CD8-positive, alpha-beta T cell (primary cell): ENCODE measurements at regions of chr3 and their contacts with region 1.

Region 1: DNA sequence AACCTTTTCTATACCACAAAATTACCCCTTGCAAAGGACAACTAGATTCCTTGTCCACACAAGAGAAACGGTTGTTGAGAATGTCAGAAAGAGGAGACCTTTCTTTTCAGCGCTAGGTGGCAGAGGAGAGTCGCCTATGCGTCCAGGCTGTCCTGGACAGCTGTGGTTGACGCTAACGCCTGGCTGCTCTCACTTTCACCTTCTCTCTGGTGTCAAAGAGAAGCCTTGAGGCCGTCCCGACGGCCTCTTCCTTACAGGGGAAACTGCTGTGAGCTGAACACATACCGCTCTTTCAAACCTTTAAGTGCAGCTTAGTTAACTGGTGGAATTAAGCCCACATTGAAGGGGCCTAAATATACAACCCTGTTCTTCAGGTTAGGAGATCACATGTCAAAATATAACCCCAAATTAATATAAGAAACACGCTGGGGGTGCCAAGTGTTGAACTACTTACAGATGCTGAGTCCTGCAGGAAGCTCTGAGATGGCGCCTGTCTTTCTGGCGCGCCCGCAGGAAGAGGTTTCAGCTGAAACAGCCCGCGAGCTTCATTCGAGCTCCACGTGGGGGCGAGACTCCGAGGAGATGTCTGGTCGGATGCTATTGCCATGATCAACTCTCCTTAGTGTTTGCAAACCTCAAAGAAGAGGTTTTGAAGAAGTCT is 26.1 kb upstream of the KBTBD8 start:
- DNase-seq: peak; percentile 16 to 77 (median 55)
- ATAC-seq: peak; percentile 89
- H3K4me3 ChIP-seq: peak overlapping the region; percentile 46 to 70
- H3K4me3 Mint-ChIP-seq: peak overlapping the region; percentile 87
- H3K27ac ChIP-seq: peak overlapping the region in 1 of 2 experiments; percentile 33
- H3K27ac Mint-ChIP-seq: peak overlapping the region; percentile 77
- H3K4me1 ChIP-seq: peaks cover 8% of the 10 kb centered on the region
- H3K4me1 Mint-ChIP-seq: peaks cover 8% of the 10 kb centered on the region
- H3K27me3 ChIP-seq: no peaks in the 10 kb centered on the region
- H3K27me3 Mint-ChIP-seq: peaks cover 4% of the 10 kb centered on the region
- CTCF ChIP-seq: peak; percentile 89

Region 2: GRCh38 chr3:65170390-65171042 is 1801.5 kb before region 1 on chr3:
- CTCF ChIA-PET with region 1: no interaction called
- POLR2A ChIA-PET with region 1: no interaction called
- intact Hi-C with region 1: no loop called
- DNase-seq: no peak
- ATAC-seq: no peak
- H3K4me3 ChIP-seq: no peak overlapping the region
- H3K4me3 Mint-ChIP-seq: no peak overlapping the region
- H3K27ac ChIP-seq: no peak overlapping the region
- H3K27ac Mint-ChIP-seq: no peak overlapping the region
- H3K4me1 ChIP-seq: no peaks in the 10 kb centered on the region
- H3K4me1 Mint-ChIP-seq: no peaks in the 10 kb centered on the region
- H3K27me3 ChIP-seq: no peaks in the 10 kb centered on the region
- H3K27me3 Mint-ChIP-seq: no peaks in the 10 kb centered on the region
- CTCF ChIP-seq: no peak

Region 3: DNA sequence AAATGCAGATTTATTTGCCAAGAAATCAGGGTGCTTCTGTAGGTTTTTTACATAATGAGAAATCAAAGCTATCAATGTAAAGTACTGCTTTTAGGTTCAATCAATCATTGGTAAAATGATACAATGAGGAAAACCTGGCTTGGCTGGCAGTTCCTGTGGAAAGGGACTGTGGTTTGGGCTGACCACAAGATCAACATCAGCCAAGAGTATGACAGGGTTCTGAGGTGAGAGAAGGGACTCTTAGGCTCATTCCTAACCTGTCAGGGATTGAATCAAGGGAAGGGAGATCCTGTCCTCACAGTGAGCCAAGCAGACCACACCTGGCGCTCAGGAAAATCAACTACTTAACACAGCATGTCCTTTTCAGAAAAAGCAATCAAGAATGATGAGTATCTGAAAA is 1044.5 kb before region 1 on chr3:
- CTCF ChIA-PET with region 1: no interaction called
- POLR2A ChIA-PET with region 1: no interaction called
- intact Hi-C with region 1: no loop called
- DNase-seq: no peak
- ATAC-seq: no peak
- H3K4me3 ChIP-seq: no peak overlapping the region
- H3K4me3 Mint-ChIP-seq: no peak overlapping the region
- H3K27ac ChIP-seq: no peak overlapping the region
- H3K27ac Mint-ChIP-seq: no peak overlapping the region
- H3K4me1 ChIP-seq: no peaks in the 10 kb centered on the region
- H3K4me1 Mint-ChIP-seq: no peaks in the 10 kb centered on the region
- H3K27me3 ChIP-seq: peaks cover 0 to 2% of the 10 kb centered on the region in 2 experiments
- H3K27me3 Mint-ChIP-seq: peaks cover 5% of the 10 kb centered on the region
- CTCF ChIP-seq: no peak

Region 4: DNA sequence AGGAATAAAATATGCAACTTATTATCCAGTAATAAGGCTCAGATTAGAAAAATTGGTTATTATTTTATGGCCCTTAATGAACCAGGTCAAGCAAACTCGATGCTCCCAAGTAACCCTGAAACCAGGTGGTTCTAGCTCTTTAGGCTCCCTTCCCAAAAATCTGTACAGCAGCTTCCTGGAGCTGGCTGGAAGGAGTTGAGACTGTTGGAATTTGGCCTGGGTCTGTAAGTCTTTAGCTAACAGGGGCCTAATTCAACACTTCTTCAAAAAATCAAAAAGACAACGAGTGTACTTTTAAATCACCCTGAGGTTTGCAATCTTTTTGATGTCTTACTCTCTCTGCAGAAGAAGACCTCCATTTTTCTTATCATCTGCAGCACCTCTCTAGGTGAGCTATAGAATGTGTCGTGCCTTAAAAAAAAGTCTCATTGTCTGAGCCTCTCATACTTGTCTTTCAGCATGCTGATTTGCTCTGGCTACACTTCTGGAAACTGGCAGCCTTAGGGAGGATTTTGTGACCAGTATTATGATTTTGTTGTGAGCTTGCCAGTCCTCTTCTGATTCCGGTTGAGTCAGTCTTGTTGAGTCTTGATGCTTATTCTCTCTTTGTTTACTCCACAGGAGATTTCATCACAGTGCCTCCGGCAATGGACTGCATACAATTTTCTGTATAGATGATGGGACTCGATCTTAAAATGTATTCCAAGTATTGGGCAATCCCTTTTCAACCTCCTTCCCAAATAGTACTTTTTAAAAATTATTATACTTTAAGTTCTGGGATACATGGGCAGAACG is 208.9 kb before region 1 on chr3:
- CTCF ChIA-PET with region 1: no interaction called
- POLR2A ChIA-PET with region 1: no interaction called
- intact Hi-C with region 1: no loop called
- DNase-seq: no peak
- ATAC-seq: no peak
- H3K4me3 ChIP-seq: no peak overlapping the region
- H3K4me3 Mint-ChIP-seq: no peak overlapping the region
- H3K27ac ChIP-seq: no peak overlapping the region
- H3K27ac Mint-ChIP-seq: no peak overlapping the region
- H3K4me1 ChIP-seq: no peaks in the 10 kb centered on the region
- H3K4me1 Mint-ChIP-seq: no peaks in the 10 kb centered on the region
- H3K27me3 ChIP-seq: no peaks in the 10 kb centered on the region
- H3K27me3 Mint-ChIP-seq: peaks cover under 1% of the 10 kb centered on the region
- CTCF ChIP-seq: no peak

Region 5: GRCh38 chr3:66957367-66957766 is 14.7 kb before region 1 on chr3:
- CTCF ChIA-PET with region 1: interaction called, 14 read pairs
- POLR2A ChIA-PET with region 1: no interaction called
- intact Hi-C with region 1: no loop called
- DNase-seq: no peak
- ATAC-seq: no peak
- H3K4me3 ChIP-seq: no peak overlapping the region
- H3K4me3 Mint-ChIP-seq: no peak overlapping the region
- H3K27ac ChIP-seq: no peak overlapping the region
- H3K27ac Mint-ChIP-seq: no peak overlapping the region
- H3K4me1 ChIP-seq: no peaks in the 10 kb centered on the region
- H3K4me1 Mint-ChIP-seq: no peaks in the 10 kb centered on the region
- H3K27me3 ChIP-seq: peaks cover 0 to 2% of the 10 kb centered on the region in 2 experiments
- H3K27me3 Mint-ChIP-seq: peaks cover 11% of the 10 kb centered on the region
- CTCF ChIP-seq: no peak

Region 6: DNA sequence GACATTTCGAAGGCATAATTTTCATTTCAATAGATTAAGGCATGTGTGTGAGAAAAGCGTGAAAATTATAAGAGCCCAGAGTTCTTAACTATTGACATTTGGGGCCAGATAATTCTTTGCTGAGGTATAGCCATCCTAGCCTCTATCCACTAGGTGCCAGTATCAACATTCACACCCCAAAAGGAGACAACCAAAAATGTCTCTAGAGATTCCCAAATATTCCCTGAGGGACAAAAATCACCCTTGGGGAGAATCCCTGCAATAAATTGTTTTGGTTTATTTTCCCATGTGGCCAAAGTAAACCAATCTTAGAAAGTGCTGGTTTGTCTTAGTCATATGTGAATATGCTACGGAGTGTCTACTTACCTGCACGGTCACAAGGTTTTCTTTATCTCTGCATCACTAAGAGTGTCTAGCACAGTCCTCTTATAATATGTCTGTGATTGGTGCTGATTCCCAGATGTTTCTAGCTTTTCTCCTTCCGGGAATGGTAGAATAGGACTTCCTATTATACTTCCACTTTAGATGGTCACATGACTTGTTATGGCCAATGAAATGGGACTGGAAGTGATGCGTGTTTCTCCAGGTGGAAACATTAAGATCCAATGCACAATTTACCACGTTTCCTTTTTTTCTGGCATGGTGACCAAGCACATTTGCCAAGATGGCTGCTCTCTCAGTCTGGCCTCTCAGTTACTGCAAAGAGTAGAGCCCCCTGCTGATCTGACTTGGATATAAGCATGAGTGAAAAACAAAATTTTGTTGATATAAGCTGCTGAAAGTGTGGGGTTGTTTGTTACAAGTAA is 18.0 kb after region 1 on chr3:
- CTCF ChIA-PET with region 1: interaction called, 42 read pairs
- POLR2A ChIA-PET with region 1: interaction called, 3 read pairs
- intact Hi-C with region 1: no loop called
- DNase-seq: peak in 1 of 9 experiments; percentile 21
- ATAC-seq: no peak
- H3K4me3 ChIP-seq: no peak overlapping the region
- H3K4me3 Mint-ChIP-seq: no peak overlapping the region
- H3K27ac ChIP-seq: no peak overlapping the region
- H3K27ac Mint-ChIP-seq: no peak overlapping the region
- H3K4me1 ChIP-seq: no peaks in the 10 kb centered on the region
- H3K4me1 Mint-ChIP-seq: no peaks in the 10 kb centered on the region
- H3K27me3 ChIP-seq: no peaks in the 10 kb centered on the region
- H3K27me3 Mint-ChIP-seq: peaks cover 8% of the 10 kb centered on the region
- CTCF ChIP-seq: no peak

Region 7: GRCh38 chr3:67037615-67038014 is 65.6 kb after region 1 on chr3:
- CTCF ChIA-PET with region 1: interaction called, 9 read pairs
- POLR2A ChIA-PET with region 1: no interaction called
- intact Hi-C with region 1: loop called in 1 of 2 experiments (anchors 5 kb)
- DNase-seq: peak in 1 of 9 experiments; percentile 10
- ATAC-seq: no peak
- H3K4me3 ChIP-seq: no peak overlapping the region
- H3K4me3 Mint-ChIP-seq: no peak overlapping the region
- H3K27ac ChIP-seq: no peak overlapping the region
- H3K27ac Mint-ChIP-seq: no peak overlapping the region
- H3K4me1 ChIP-seq: no peaks in the 10 kb centered on the region
- H3K4me1 Mint-ChIP-seq: no peaks in the 10 kb centered on the region
- H3K27me3 ChIP-seq: no peaks in the 10 kb centered on the region
- H3K27me3 Mint-ChIP-seq: no peaks in the 10 kb centered on the region
- CTCF ChIP-seq: no peak

Region 8: GRCh38 chr3:67678665-67679064 is 706.6 kb after region 1 on chr3:
- CTCF ChIA-PET with region 1: no interaction called
- POLR2A ChIA-PET with region 1: no interaction called
- intact Hi-C with region 1: no loop called
- DNase-seq: peak in 2 of 9 experiments; percentile 25 to 40
- ATAC-seq: peak; percentile 42
- H3K4me3 ChIP-seq: no peak overlapping the region
- H3K4me3 Mint-ChIP-seq: peak overlapping the region; percentile 0
- H3K27ac ChIP-seq: peak overlapping the region in 1 of 2 experiments; percentile 18
- H3K27ac Mint-ChIP-seq: peak overlapping the region; percentile 62
- H3K4me1 ChIP-seq: peaks cover 26% of the 10 kb centered on the region
- H3K4me1 Mint-ChIP-seq: peaks cover 40% of the 10 kb centered on the region
- H3K27me3 ChIP-seq: no peaks in the 10 kb centered on the region
- H3K27me3 Mint-ChIP-seq: no peaks in the 10 kb centered on the region
- CTCF ChIP-seq: no peak

Region 9: DNA sequence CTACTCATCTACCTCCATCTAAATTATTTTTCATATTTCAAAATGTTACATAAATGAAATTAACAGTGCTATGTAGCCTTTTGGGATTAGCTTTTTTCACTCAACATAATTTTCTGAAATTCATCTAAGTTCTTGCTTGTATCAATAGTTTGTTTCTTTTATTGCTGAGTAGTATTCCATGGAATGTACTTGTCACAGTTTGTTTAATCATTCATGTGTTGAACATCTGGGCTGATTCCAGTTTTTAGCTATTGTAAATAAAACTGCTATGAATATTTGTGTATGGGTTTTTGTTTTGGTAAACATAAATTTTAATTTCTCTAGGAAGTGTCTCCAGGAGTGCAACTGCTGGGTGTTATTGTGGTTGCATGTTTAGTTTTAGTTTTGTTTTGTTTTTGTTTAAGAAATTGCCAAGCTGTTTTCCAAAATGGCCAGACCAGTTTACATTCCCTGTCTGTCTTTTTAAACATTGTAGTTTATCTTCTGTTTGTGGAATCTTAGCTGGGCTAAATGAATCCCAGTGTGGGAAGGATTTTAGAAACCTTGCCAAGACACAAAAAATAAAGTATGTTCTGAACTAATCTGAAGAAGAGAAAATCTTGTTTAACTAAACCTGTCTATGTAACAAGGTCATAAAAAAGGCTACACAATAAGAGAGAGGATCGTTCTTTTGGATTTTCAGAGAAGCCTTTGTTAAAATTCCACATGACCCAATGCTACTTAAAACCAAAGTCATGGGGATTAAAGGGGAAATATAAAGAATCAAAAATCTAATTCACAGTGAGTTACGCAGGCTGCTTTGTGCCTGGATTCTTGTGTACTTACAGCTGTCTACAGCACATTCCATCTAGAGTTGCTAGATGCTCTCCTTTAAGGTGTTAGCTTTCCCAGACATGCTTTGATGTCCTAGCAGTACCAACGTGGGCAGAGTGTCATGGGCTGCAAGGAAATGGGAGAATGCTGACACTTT is 811.5 kb after region 1 on chr3:
- CTCF ChIA-PET with region 1: no interaction called
- POLR2A ChIA-PET with region 1: no interaction called
- intact Hi-C with region 1: loop called in 1 of 2 experiments (anchors 10 kb)
- DNase-seq: no peak
- ATAC-seq: no peak
- H3K4me3 ChIP-seq: no peak overlapping the region
- H3K4me3 Mint-ChIP-seq: no peak overlapping the region
- H3K27ac ChIP-seq: no peak overlapping the region
- H3K27ac Mint-ChIP-seq: no peak overlapping the region
- H3K4me1 ChIP-seq: no peaks in the 10 kb centered on the region
- H3K4me1 Mint-ChIP-seq: peaks cover 4% of the 10 kb centered on the region
- H3K27me3 ChIP-seq: no peaks in the 10 kb centered on the region
- H3K27me3 Mint-ChIP-seq: peaks cover 2% of the 10 kb centered on the region
- CTCF ChIP-seq: no peak

Region 10: DNA sequence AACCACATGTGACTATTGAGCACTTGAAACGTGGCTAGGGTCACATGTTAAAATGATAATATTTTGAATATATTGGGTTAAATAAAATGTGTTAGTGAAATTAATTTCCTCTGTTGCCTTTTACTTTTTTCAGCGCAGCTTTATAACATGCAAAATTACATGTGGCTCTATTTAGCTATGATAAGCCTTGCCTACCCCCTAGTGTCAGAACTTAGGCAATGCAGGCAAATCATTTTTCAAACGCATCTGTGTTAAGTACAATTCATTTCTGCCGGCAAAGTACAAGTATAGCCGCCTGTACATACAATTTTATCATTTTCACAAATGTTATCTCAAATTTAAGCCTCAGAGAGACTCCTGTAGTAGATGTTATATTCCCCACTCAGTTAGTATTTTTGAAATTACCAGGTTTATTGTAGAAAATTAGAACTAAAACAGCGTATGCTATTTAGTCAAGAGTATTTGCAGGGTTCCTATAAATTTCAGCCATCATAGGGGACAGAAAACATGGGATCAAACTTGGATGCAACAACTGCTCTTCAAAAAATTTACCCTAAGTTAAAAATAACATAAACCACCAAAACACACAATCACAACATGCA is 1904.2 kb after region 1 on chr3:
- CTCF ChIA-PET with region 1: interaction called, 59 read pairs
- POLR2A ChIA-PET with region 1: no interaction called
- intact Hi-C with region 1: loop called (anchors 2 to 10 kb)
- DNase-seq: peak in 4 of 9 experiments; percentile 18 to 69 (median 45)
- ATAC-seq: peak; percentile 61
- H3K4me3 ChIP-seq: no peak overlapping the region
- H3K4me3 Mint-ChIP-seq: no peak overlapping the region
- H3K27ac ChIP-seq: no peak overlapping the region
- H3K27ac Mint-ChIP-seq: no peak overlapping the region
- H3K4me1 ChIP-seq: no peaks in the 10 kb centered on the region
- H3K4me1 Mint-ChIP-seq: no peaks in the 10 kb centered on the region
- H3K27me3 ChIP-seq: peaks cover 0 to 3% of the 10 kb centered on the region in 2 experiments
- H3K27me3 Mint-ChIP-seq: peaks cover 14% of the 10 kb centered on the region
- CTCF ChIP-seq: peak; percentile 87

Region 11: DNA sequence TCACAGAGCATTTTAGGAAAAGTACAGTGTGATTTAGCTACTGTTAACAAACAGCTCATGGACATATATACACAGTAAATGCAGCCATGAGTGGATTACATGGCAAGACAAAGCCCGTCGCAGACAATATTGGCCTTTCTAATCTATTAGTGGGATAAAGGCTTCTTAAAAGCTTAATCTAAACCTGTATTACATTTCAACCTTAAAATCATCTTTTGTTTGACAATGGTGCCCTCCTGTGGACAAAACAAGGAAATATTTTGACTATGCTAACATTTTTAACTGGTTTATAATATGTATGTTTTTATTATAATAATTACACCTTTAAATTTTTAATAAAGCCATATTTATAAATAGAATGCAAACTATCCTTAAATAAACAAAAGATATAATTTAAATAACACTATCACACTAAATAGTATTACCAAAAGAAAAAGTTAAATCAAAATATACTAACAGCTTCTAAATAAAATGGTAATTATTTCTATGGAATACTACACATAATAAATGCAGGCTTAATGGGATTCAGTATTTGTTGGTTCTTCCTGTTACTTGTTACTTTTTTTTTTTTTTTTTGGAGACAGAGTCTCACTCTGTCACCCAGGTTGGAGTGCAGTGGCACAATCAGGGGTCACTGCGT is 1921.7 kb after region 1 on chr3:
- CTCF ChIA-PET with region 1: interaction called, 22 read pairs
- POLR2A ChIA-PET with region 1: interaction called, 6 read pairs
- intact Hi-C with region 1: loop called in 1 of 2 experiments (anchors 5 kb)
- DNase-seq: peak in 3 of 9 experiments; percentile 16 to 56 (median 47)
- ATAC-seq: no peak
- H3K4me3 ChIP-seq: no peak overlapping the region
- H3K4me3 Mint-ChIP-seq: no peak overlapping the region
- H3K27ac ChIP-seq: no peak overlapping the region
- H3K27ac Mint-ChIP-seq: no peak overlapping the region
- H3K4me1 ChIP-seq: no peaks in the 10 kb centered on the region
- H3K4me1 Mint-ChIP-seq: no peaks in the 10 kb centered on the region
- H3K27me3 ChIP-seq: no peaks in the 10 kb centered on the region
- H3K27me3 Mint-ChIP-seq: no peaks in the 10 kb centered on the region
- CTCF ChIP-seq: peak; percentile 66